HepG2 (cell line): ENCODE measurements at regions of chr10 and their contacts with region 1.

Region 1: DNA sequence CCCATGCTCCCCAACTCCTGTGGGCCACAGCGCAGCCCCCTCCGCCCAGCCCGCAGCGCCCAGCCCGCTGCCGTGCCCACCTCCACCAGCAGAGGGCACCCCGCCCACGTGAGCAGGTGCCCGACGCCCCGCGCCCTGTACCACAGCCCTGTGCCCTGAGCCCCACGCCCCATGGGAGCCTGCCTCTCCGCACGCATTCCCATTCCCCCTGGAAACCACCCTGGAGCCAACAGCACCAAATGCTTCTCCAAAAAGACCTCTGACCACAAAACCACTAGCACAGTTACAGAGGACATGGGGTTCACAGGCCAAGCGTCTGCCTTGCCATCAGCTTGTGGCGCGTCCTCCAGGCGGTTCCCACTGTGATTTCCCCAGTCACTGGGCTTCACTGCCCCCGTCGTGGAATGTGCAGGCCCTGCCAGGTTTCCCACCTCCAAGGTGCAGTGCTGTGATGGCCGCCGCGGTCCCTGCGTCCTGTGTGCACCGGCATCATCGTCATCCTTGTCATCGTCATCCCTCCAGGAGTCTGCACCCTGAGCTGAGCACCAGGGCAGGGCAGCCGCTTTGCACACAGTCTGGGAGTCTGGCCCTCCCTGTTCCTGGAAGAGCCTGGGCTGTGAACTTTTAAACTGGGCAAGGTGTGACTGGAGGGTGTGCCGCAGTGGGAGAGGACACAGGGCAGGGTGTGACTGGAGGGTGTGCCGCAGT is 61.7 kb downstream of the PWWP2B start:
- DNase-seq: no peak
- ATAC-seq: peak; percentile 64
- H3K4me3 ChIP-seq: peak overlapping the region in 1 of 3 experiments; percentile 41; a peak in 2 of 6 replicates
- H3K27ac ChIP-seq: no peak overlapping the region
- H3K4me1 ChIP-seq: peaks cover 69% of the 10 kb centered on the region
- H3K27me3 ChIP-seq: peaks cover 11 to 34% of the 10 kb centered on the region in 2 experiments; a peak in 4 of 5 replicates
- CTCF ChIP-seq: peak; percentile 96
- EP300 ChIP-seq: no peak
- POLR2A ChIP-seq: no peak
- RAD21 ChIP-seq: peak; percentile 91

Region 2: GRCh38 chr10:132516771-132517725 is 58.3 kb after region 1 on chr10:
- CTCF ChIA-PET with region 1: interaction called, 3 read pairs
- POLR2A ChIA-PET with region 1: interaction called, 10 read pairs
- in situ Hi-C with region 1: no loop called
- intact Hi-C with region 1: loop called (anchors 5 kb)
- DNase-seq: peak; percentile 92
- ATAC-seq: peak; percentile 65
- H3K4me3 ChIP-seq: peak overlapping the region; percentile 48 to 75 (median 62)
- H3K27ac ChIP-seq: peak overlapping the region; percentile 69
- H3K4me1 ChIP-seq: peaks cover 61% of the 10 kb centered on the region
- H3K27me3 ChIP-seq: peaks cover 2 to 25% of the 10 kb centered on the region in 2 experiments; a peak in 4 of 5 replicates
- CTCF ChIP-seq: no peak
- EP300 ChIP-seq: peak in 1 of 2 experiments; percentile 78; a peak in 2 of 4 replicates
- POLR2A ChIP-seq: peak in 1 of 2 experiments; percentile 55; a peak in 2 of 4 replicates
- RAD21 ChIP-seq: peak; percentile 30; the same call in 1 of the 2 replicates

Region 3: DNA sequence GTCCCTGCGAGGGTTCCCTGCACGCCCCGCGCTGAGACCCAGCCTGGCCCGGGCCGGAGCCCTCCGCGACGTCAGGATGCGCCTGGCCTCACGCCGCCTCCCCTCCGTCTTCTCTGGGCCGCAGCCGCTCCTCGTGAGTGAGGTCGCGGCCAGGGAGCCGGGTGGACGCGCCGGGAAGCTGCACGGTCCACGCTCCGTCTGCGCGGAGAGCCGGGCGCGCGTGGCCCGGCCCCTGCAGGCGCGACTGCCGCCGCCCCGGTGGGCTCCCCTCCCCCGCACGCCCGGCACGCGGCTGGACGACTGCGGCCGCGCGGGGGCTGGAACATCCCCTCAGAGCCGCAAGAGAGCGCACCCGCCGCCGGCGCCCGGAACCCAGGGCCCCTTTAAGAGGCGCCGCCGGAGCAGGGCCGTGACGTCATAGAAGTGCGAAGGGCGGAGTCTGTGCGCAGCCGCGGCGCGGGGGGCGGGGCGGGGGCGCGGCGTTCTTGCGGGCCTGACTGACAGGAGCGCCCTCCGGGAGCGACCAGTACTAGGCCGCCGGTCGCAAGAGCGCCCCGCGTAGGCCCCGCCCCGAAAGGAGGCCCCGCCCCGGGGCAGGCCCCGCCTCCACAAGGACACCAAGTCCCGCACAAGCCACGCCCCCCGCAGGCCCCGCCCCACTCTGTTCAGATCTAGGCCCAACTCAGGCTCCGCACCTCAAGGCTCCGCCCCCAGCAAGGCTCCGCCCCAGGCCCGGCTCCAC is 78.4 kb after region 1 on chr10:
- CTCF ChIA-PET with region 1: no interaction called
- POLR2A ChIA-PET with region 1: no interaction called
- in situ Hi-C with region 1: loop called (anchors 5 kb)
- intact Hi-C with region 1: loop called (anchors 1 kb)
- DNase-seq: peak; percentile 95
- ATAC-seq: peak; percentile 82
- H3K4me3 ChIP-seq: peak overlapping the region; percentile 79 to 85 (median 83); a peak in 5 of 6 replicates
- H3K27ac ChIP-seq: peak overlapping the region; percentile 67
- H3K4me1 ChIP-seq: peaks cover 49% of the 10 kb centered on the region
- H3K27me3 ChIP-seq: no peaks in the 10 kb centered on the region
- CTCF ChIP-seq: peak; percentile 50
- EP300 ChIP-seq: no peak
- POLR2A ChIP-seq: peak in 1 of 2 experiments; percentile 67; a peak in 2 of 4 replicates
- RAD21 ChIP-seq: peak; percentile 76; the same call in 1 of the 2 replicates

Region 4: GRCh38 chr10:132571650-132572535 is 113.1 kb after region 1 on chr10:
- CTCF ChIA-PET with region 1: interaction called, 10 read pairs
- POLR2A ChIA-PET with region 1: no interaction called
- in situ Hi-C with region 1: loop called (anchors 5 kb)
- intact Hi-C with region 1: loop called (anchors 1 kb)
- DNase-seq: peak; percentile 75
- ATAC-seq: peak; percentile 86
- H3K4me3 ChIP-seq: peak overlapping the region in 1 of 3 experiments; percentile 45; a peak in 1 of 6 replicates
- H3K27ac ChIP-seq: no peak overlapping the region
- H3K4me1 ChIP-seq: peaks cover 40% of the 10 kb centered on the region
- H3K27me3 ChIP-seq: no peaks in the 10 kb centered on the region
- CTCF ChIP-seq: no peak
- EP300 ChIP-seq: no peak
- POLR2A ChIP-seq: no peak
- RAD21 ChIP-seq: no peak

Region 5: DNA sequence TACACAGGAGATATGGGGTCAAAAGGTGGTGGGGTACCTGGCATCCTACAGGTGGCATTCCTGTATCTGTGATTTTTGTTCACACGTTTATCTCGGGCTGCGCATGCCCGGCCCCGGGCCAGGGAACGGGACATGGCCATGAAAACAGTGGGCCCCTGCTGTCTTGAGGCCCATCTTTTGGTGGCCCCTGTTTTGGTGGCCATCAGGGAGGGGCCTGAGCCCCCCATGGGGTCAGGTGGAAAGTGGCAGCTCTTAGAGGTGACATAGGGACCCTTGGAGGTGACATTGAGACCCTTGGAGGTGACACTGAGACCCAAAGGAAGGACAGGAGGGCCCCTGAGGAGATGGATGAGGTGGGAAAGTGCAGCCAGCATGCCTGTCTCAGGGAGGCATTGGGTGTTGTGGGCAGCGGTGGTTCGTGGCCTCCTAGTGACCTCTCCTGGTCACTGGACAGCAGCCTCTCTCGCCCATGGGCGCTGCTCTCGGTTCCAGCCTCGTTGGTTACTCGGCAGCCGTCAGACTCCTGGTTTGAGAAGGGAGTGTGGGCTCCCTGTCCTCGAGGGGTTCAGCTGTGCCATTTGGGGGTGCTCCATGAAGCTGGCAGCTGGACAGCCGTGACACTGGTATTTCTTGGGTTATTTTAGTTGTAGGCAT is 118.7 kb after region 1 on chr10:
- CTCF ChIA-PET with region 1: interaction called, 10 read pairs
- POLR2A ChIA-PET with region 1: no interaction called
- in situ Hi-C with region 1: loop called (anchors 5 kb)
- intact Hi-C with region 1: loop called (anchors 1 kb)
- DNase-seq: peak; percentile 32
- ATAC-seq: peak; percentile 75
- H3K4me3 ChIP-seq: no peak overlapping the region
- H3K27ac ChIP-seq: no peak overlapping the region
- H3K4me1 ChIP-seq: peaks cover 27% of the 10 kb centered on the region
- H3K27me3 ChIP-seq: no peaks in the 10 kb centered on the region
- CTCF ChIP-seq: peak; percentile 83
- EP300 ChIP-seq: no peak
- POLR2A ChIP-seq: no peak
- RAD21 ChIP-seq: peak; percentile 77

Region 6: DNA sequence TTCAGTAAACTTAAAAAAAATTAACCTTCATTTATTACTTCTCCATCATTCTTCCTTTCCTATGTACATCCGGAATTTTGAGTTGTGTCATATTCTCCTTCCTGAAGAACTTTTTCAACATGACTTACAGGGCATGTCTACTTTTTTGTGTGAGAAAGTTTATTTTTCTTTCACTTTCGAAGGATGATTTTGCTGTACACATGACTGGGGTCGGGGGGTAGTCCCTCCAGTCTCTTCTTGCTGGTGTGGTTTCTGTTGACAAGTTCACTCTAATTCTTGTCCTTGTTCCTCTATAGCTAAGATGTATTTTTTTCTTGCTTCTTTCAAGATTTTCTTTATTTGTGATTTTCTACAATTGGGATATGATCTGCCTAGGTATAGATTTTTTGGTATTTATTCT is 134.6 kb after region 1 on chr10:
- CTCF ChIA-PET with region 1: no interaction called
- POLR2A ChIA-PET with region 1: interaction called, 3 read pairs
- in situ Hi-C with region 1: no loop called
- intact Hi-C with region 1: loop called (anchors 5 kb)
- DNase-seq: no peak
- ATAC-seq: no peak
- H3K4me3 ChIP-seq: no peak overlapping the region
- H3K27ac ChIP-seq: no peak overlapping the region
- H3K4me1 ChIP-seq: peaks cover 52% of the 10 kb centered on the region
- H3K27me3 ChIP-seq: no peaks in the 10 kb centered on the region; a peak in 1 of 5 replicates
- CTCF ChIP-seq: no peak
- EP300 ChIP-seq: no peak
- POLR2A ChIP-seq: no peak
- RAD21 ChIP-seq: no peak

Region 7: GRCh38 chr10:132637477-132638129 is 178.9 kb after region 1 on chr10:
- CTCF ChIA-PET with region 1: interaction called, 54 read pairs
- POLR2A ChIA-PET with region 1: interaction called, 3 read pairs
- in situ Hi-C with region 1: loop called (anchors 5 kb)
- intact Hi-C with region 1: loop called (anchors 1 kb)
- DNase-seq: peak; percentile 59
- ATAC-seq: peak; percentile 88
- H3K4me3 ChIP-seq: no peak overlapping the region
- H3K27ac ChIP-seq: no peak overlapping the region
- H3K4me1 ChIP-seq: no peaks in the 10 kb centered on the region
- H3K27me3 ChIP-seq: no peaks in the 10 kb centered on the region; a peak in 1 of 5 replicates
- CTCF ChIP-seq: peak; percentile 80
- EP300 ChIP-seq: no peak
- POLR2A ChIP-seq: no peak
- RAD21 ChIP-seq: peak; percentile 74